A549 (cell line): ENCODE measurements at regions of chr17 and their contacts with region 1.

Region 1: GRCh38 chr17:34199932-34200534 is 55.1 kb upstream of the CCL2 start:
- DNase-seq: peak; percentile 73 to 87
- ATAC-seq: peak; percentile 90 to 97
- H3K4me3 ChIP-seq: no peak overlapping the region
- H3K27ac ChIP-seq: 0 out of 6 replicates have a peak overlapping the region, but pooled peaks of 1 of the 2 experiments have one; percentile 16
- H3K4me1 ChIP-seq: peaks cover 4% of the 10 kb centered on the region; the same call in 1 of the 3 replicates
- CTCF ChIP-seq: peak; percentile 100
- EP300 ChIP-seq: no peak
- POLR2A ChIP-seq: no peak
- RAD21 ChIP-seq: peak; percentile 100

Region 2: GRCh38 chr17:34107019-34107418 is 93.0 kb before region 1 on chr17:
- CTCF ChIA-PET with region 1: no interaction called
- POLR2A ChIA-PET with region 1: no interaction called
- DNase-seq: no peak
- ATAC-seq: no peak
- H3K4me3 ChIP-seq: no peak overlapping the region
- H3K27ac ChIP-seq: no peak overlapping the region
- H3K4me1 ChIP-seq: no peaks in the 10 kb centered on the region
- CTCF ChIP-seq: no peak
- EP300 ChIP-seq: no peak
- POLR2A ChIP-seq: no peak
- RAD21 ChIP-seq: no peak

Region 3: GRCh38 chr17:34220754-34221395 is 20.8 kb after region 1 on chr17:
- CTCF ChIA-PET with region 1: interaction called, 61 read pairs
- POLR2A ChIA-PET with region 1: no interaction called
- DNase-seq: no peak
- ATAC-seq: no peak
- H3K4me3 ChIP-seq: no peak overlapping the region
- H3K27ac ChIP-seq: no peak overlapping the region
- H3K4me1 ChIP-seq: no peaks in the 10 kb centered on the region
- CTCF ChIP-seq: no peak
- EP300 ChIP-seq: no peak
- POLR2A ChIP-seq: no peak
- RAD21 ChIP-seq: no peak

Region 4: GRCh38 chr17:34248511-34249024 is 48.5 kb after region 1 on chr17:
- CTCF ChIA-PET with region 1: interaction called, 11 read pairs
- POLR2A ChIA-PET with region 1: no interaction called
- DNase-seq: peak in 1 of 2 experiments; percentile 55
- ATAC-seq: peak in 1 of 2 experiments; percentile 8; a peak in 2 of 6 replicates
- H3K4me3 ChIP-seq: no peak overlapping the region
- H3K27ac ChIP-seq: peak overlapping the region; percentile 55 to 87; a peak in 5 of 6 replicates
- H3K4me1 ChIP-seq: peaks cover 57% of the 10 kb centered on the region
- CTCF ChIP-seq: no peak
- EP300 ChIP-seq: no peak
- POLR2A ChIP-seq: no peak
- RAD21 ChIP-seq: no peak

Region 5: GRCh38 chr17:34300652-34301370 is 100.8 kb after region 1 on chr17:
- CTCF ChIA-PET with region 1: interaction called, 47 read pairs
- POLR2A ChIA-PET with region 1: no interaction called
- DNase-seq: no peak
- ATAC-seq: no peak
- H3K4me3 ChIP-seq: no peak overlapping the region
- H3K27ac ChIP-seq: no peak overlapping the region
- H3K4me1 ChIP-seq: no peaks in the 10 kb centered on the region; the same call in 2 of the 3 replicates
- CTCF ChIP-seq: no peak
- EP300 ChIP-seq: no peak
- POLR2A ChIP-seq: no peak
- RAD21 ChIP-seq: no peak

Region 6: DNA sequence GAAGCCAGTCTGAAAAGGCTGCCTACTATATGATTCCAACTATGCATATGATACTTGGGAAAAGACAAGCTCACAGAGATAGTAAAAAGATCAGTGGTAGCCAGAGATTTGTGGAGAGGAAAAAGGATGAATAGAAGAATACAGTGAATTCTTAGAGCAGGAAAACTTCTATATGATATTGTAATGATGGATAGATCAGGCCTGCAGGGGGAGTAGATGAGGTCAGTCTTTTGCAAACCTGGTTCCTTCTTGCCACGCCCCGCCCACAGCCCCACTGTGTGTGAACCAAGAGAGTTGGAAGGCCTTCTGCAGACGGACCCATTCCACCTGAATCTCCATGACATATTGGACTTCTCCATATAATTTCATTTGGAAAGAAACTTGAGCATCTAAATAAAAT is 118.4 kb after region 1 on chr17:
- CTCF ChIA-PET with region 1: interaction called, 10 read pairs
- POLR2A ChIA-PET with region 1: no interaction called
- DNase-seq: peak; percentile 28 to 35
- ATAC-seq: peak; percentile 59 to 81; a peak in 4 of 6 replicates
- H3K4me3 ChIP-seq: no peak overlapping the region
- H3K27ac ChIP-seq: no peak overlapping the region
- H3K4me1 ChIP-seq: no peaks in the 10 kb centered on the region
- CTCF ChIP-seq: no peak
- EP300 ChIP-seq: no peak
- POLR2A ChIP-seq: no peak
- RAD21 ChIP-seq: 0 out of 5 replicates have a peak, but pooled peaks of 1 of the 2 experiments have one; percentile 10

Region 7: GRCh38 chr17:34347063-34347462 is 147.0 kb after region 1 on chr17:
- CTCF ChIA-PET with region 1: interaction called, 571 read pairs
- POLR2A ChIA-PET with region 1: no interaction called
- DNase-seq: no peak
- ATAC-seq: 0 out of 6 replicates have a peak, but pooled peaks of 1 of the 2 experiments have one; percentile 30
- H3K4me3 ChIP-seq: no peak overlapping the region
- H3K27ac ChIP-seq: no peak overlapping the region
- H3K4me1 ChIP-seq: no peaks in the 10 kb centered on the region
- CTCF ChIP-seq: no peak
- EP300 ChIP-seq: no peak
- POLR2A ChIP-seq: no peak
- RAD21 ChIP-seq: no peak

Region 8: DNA sequence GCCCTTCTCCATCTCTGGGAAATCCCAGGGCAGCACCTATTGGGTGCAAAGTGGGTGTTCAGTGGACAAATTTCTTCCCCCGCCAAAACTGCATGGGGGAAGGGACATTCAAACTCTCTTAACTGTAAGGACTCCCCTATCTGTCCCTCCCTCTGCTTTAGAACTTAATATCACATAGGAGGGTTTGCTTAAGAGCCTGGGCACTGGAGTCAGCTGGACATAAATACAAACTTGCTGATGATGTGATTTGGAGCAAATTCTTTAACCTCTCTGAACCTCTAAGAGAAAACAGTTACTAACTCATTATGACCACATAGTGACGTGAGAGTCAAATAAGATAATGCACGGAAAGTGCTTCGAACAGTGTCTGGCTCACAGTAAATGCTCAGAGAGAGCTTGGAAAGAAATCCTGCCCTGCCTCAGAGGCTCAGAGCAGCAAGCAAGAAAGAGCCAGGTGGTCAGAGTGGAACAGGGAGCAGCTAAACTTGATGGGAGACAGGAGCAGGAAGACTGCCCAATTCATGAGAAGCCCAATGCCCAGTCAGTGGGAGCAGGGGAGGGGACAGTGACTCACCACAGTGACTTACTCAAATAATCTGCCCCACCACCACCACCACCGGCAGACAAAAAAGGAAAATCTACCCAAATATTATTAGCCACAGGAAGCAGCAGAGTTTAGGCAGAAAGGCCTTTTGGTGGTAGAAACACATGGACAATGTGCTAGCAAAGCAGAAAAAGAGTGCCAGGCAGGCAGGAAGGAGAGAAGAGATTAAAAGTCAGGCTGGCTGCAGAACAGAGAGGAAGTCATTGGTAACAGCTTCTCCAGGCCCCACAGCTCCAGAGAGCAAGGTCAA is 186.9 kb after region 1 on chr17:
- CTCF ChIA-PET with region 1: interaction called, 12 read pairs
- POLR2A ChIA-PET with region 1: no interaction called
- DNase-seq: no peak
- ATAC-seq: no peak
- H3K4me3 ChIP-seq: no peak overlapping the region
- H3K27ac ChIP-seq: no peak overlapping the region
- H3K4me1 ChIP-seq: no peaks in the 10 kb centered on the region
- CTCF ChIP-seq: no peak
- EP300 ChIP-seq: no peak
- POLR2A ChIP-seq: no peak
- RAD21 ChIP-seq: no peak